ENCODE measurements at regions of chr10 and their contacts with region 1.

Region 1: DNA sequence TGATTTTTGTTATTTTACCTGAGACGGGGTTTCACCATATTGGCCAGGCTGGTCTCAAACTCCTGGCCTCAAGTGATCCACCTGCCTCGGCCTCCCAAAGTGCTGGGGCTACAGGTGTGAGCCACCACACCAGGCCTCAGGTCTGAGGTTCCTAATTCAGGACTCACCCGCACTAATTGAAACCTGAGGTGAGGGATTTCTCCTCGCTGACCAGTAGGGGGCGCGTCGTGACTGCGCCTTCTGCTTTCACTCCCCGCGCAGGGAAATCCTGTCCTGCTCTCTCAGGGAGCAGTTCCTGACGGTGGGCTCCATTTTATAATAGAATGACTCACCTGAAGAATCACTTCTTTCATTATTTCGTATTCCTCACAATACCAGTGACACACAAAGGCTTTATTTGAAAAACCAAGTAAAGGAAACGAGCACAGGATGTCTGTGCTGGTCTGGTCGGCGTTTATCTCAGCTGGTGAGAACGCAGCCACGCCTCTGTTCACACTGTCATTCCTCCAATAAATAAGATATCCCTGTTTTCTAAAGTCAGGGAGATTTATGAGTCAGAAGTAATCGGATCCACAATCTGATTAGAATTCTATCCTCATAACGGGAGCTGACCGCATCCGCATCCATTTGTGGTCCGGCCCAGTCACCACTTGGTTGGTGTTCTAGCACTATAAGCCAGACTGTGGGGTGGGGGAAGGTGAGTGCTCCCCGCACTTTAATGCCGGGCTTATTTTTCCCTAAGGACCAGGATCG is 35.4 kb downstream of the BAG3 start:
- DNase-seq: peak; percentile 77
- ATAC-seq: peak; percentile 29
- H3K4me3 Mint-ChIP-seq: peak overlapping the region; percentile 82
- H3K27ac Mint-ChIP-seq: peak overlapping the region; percentile 100
- H3K4me1 Mint-ChIP-seq: peaks cover 28% of the 10 kb centered on the region
- H3K27me3 Mint-ChIP-seq: no peaks in the 10 kb centered on the region
- CTCF ChIP-seq: peak; percentile 89

Region 2: DNA sequence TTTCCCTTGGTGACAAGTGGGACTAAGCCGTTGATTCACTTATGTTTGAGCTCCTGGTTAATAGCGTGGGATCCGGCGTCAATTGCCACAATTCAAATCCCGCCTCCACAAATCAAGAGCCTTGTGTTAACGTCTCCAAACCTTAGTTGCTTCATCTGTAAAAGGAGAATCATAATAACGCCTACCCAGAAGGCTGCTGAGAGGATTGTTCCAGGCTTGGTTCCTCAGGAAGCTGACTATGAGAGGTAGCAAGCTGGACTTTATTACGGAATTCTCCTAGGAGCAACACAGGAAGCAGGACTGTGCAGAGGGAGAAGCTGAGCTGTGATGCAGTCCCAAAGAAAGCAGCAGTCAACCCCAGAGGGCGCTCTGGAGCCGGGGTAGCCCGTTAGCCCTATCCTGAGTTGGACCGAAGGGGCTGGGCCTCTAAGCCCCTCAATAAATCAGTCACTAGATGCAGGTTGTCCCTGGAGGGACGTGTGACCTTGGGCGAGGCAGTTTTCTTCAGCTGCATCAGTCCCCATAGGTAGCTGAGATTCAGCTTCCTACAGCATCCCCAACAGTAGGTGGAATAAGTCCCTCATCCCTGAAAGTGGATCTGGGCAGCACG is 42.3 kb before region 1 on chr10:
- CTCF ChIA-PET with region 1: interaction called, 18 read pairs
- POLR2A ChIA-PET with region 1: no interaction called
- DNase-seq: peak; percentile 78
- ATAC-seq: peak; percentile 99
- H3K4me3 Mint-ChIP-seq: no peak overlapping the region
- H3K27ac Mint-ChIP-seq: no peak overlapping the region
- H3K4me1 Mint-ChIP-seq: peaks cover 7% of the 10 kb centered on the region; the same call in 1 of the 2 replicates
- H3K27me3 Mint-ChIP-seq: no peaks in the 10 kb centered on the region; the same call in 1 of the 2 replicates
- CTCF ChIP-seq: peak; percentile 29; the same call in 1 of the 2 replicates

Region 3: DNA sequence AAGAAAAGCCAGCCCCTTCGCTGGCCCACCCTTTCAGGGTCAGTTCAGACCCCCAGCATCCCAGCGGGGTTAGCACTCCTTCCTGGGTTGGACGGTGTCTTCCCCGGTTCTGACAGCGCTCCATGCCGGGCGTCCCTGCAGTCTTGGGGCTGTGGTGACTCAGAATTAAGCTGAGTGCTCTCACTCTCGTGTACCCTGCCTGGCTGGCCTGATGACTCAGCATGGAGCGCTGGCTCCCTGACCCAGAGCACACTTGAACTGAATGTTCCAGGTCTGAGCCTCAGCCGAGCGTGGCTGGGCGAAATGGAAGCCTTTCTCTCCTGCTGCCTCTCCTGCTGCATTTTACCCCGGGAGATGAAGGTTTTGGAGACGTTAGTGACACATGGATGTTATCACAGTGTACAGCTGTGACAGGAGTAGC is 28.4 kb before region 1 on chr10:
- CTCF ChIA-PET with region 1: interaction called, 10 read pairs
- POLR2A ChIA-PET with region 1: no interaction called
- DNase-seq: no peak
- ATAC-seq: peak; percentile 82
- H3K4me3 Mint-ChIP-seq: no peak overlapping the region
- H3K27ac Mint-ChIP-seq: peak overlapping the region; percentile 83
- H3K4me1 Mint-ChIP-seq: peaks cover 33% of the 10 kb centered on the region
- H3K27me3 Mint-ChIP-seq: no peaks in the 10 kb centered on the region
- CTCF ChIP-seq: no peak

Region 4: GRCh38 chr10:119675483-119676170 is 11.0 kb before region 1 on chr10:
- CTCF ChIA-PET with region 1: interaction called, 13 read pairs
- POLR2A ChIA-PET with region 1: no interaction called
- DNase-seq: no peak
- ATAC-seq: no peak
- H3K4me3 Mint-ChIP-seq: no peak overlapping the region
- H3K27ac Mint-ChIP-seq: no peak overlapping the region
- H3K4me1 Mint-ChIP-seq: peaks cover 8% of the 10 kb centered on the region
- H3K27me3 Mint-ChIP-seq: no peaks in the 10 kb centered on the region
- CTCF ChIP-seq: no peak

Region 5: GRCh38 chr10:119742947-119743648 is 56.5 kb after region 1 on chr10:
- CTCF ChIA-PET with region 1: interaction called, 75 read pairs
- POLR2A ChIA-PET with region 1: interaction called, 3 read pairs
- DNase-seq: no peak
- ATAC-seq: no peak
- H3K4me3 Mint-ChIP-seq: no peak overlapping the region
- H3K27ac Mint-ChIP-seq: peak overlapping the region; percentile 16; the same call in 1 of the 2 replicates
- H3K4me1 Mint-ChIP-seq: peaks cover 26% of the 10 kb centered on the region
- H3K27me3 Mint-ChIP-seq: no peaks in the 10 kb centered on the region
- CTCF ChIP-seq: no peak

Region 6: DNA sequence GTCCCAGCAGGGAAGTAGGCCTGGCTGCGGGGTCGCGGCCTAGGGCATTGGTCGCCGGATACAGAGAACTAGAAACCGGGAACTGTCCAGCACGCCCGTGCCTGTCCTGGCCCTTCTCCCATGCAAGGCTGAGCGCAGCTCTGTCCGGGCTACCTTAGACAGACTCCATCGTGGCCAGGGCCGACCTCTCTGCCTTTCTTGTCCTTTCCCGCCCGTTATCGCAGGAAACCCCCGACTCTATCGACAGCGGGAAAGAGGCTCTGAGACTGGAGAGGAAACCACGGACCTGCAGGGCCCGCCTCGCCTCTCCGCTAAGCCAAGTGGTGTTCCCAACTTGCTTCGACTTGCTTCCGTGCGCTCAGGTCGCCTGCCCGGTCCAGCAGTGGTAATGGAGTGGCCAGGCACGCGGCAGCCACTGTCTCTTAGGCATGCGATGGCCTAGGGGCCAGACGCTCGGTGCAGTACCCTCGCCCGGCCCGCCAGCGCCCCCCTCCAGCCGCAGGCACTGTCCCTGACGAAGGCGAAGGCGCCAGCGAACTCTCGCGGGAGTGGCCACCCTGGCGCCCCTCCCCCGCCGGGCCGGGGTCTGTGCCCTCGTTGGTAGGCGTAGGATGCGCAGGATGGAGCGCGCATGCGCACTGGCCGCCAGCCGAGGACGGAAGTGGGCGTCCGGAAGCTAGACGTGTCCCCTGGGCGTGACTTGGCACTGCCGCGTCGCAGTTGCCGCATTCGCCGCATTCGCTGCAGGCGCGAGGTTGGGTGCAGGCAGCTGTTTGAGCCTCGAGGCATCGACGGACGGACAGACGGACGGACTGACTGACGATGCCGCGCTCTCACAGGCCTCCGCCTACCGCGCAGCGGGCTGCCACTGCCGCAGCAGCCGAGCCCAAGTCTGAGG is 131.6 kb after region 1 on chr10:
- CTCF ChIA-PET with region 1: interaction called, 25 read pairs
- POLR2A ChIA-PET with region 1: interaction called, 13 read pairs
- DNase-seq: peak; percentile 97
- ATAC-seq: peak; percentile 95
- H3K4me3 Mint-ChIP-seq: peak overlapping the region; percentile 72
- H3K27ac Mint-ChIP-seq: peak overlapping the region; percentile 94
- H3K4me1 Mint-ChIP-seq: peaks cover 32% of the 10 kb centered on the region
- H3K27me3 Mint-ChIP-seq: no peaks in the 10 kb centered on the region
- CTCF ChIP-seq: peak; percentile 44; the same call in 1 of the 2 replicates

Region 7: GRCh38 chr10:119872860-119873681 is 186.5 kb after region 1 on chr10:
- CTCF ChIA-PET with region 1: interaction called, 21 read pairs
- POLR2A ChIA-PET with region 1: interaction called, 3 read pairs
- DNase-seq: peak; percentile 76
- ATAC-seq: peak; percentile 83
- H3K4me3 Mint-ChIP-seq: peak overlapping the region; percentile 83
- H3K27ac Mint-ChIP-seq: peak overlapping the region; percentile 74; the same call in 1 of the 2 replicates
- H3K4me1 Mint-ChIP-seq: peaks cover 35% of the 10 kb centered on the region
- H3K27me3 Mint-ChIP-seq: no peaks in the 10 kb centered on the region
- CTCF ChIP-seq: no peak